Uterus (tissue), 4 donors: ENCODE measurements at regions of chr4 and their contacts with region 1.

Region 1: DNA sequence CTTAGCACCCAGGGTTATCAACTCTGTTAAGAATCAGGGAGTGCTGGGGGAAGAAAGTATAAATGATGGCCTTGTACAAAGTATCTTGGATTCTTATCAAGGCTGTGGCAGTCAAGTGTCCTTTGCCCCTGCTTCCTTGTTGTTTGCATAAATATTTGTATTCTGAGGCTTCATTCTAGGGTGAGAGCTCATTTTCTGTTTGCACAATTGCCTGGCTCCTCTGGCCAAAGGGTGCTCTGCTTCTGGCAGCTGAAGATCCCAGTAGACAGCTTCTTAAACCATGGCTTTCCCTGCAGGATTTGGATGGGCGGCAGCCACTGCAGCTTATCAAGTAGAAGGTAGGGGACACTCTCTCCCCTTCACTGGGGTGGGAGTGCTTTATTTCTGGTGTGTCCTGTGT is at the start of gene GBA3:
- DNase-seq: no peak
- H3K4me3 ChIP-seq: no peak within 1 kb of the TSS
- H3K27ac ChIP-seq: no peak within 1 kb of the TSS
- H3K4me1 ChIP-seq: no peaks in the 10 kb centered on the region
- H3K27me3 ChIP-seq: no peaks in the 10 kb centered on the region
- CTCF ChIP-seq: no peak
- POLR2A ChIP-seq: no peak
- total RNA-seq, gene GBA3: 2.4 TPM in 1 of 4 donors, not detected in the others

Region 2: DNA sequence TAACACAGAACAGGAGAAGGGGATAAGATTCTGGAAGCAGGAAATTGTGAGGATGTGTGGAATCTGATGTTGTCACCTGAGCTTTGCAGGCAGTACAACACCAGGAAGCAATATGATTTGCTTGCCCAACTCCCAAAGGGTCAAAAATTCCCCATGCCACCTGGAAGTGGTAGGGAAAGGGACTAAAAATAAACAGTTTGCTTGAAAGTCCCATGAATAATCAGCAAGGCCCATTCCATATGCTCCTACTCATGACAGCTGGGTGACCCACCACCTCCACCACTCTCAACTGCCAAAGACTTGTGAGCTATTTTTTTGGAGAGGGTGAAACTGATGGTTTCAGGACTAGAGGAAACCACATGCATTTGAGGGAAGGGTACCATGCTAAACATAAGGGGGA is 912.6 kb before region 1 on chr4:
- intact Hi-C with region 1: loop called (anchors 10 kb)
- DNase-seq: no peak
- H3K4me3 ChIP-seq: no peak overlapping the region
- H3K27ac ChIP-seq: no peak overlapping the region
- H3K4me1 ChIP-seq: no peaks in the 10 kb centered on the region
- H3K27me3 ChIP-seq: no peaks in the 10 kb centered on the region
- CTCF ChIP-seq: no peak
- POLR2A ChIP-seq: no peak

Region 3: GRCh38 chr4:22407361-22407760 is 285.4 kb before region 1 on chr4:
- intact Hi-C with region 1: loop called (anchors 5 kb)
- DNase-seq: no peak
- H3K4me3 ChIP-seq: no peak overlapping the region
- H3K27ac ChIP-seq: no peak overlapping the region
- H3K4me1 ChIP-seq: no peaks in the 10 kb centered on the region
- H3K27me3 ChIP-seq: no peaks in the 10 kb centered on the region
- CTCF ChIP-seq: no peak
- POLR2A ChIP-seq: no peak